ENCODE measurements at regions of chr4 and their contacts with region 1.

Region 1: DNA sequence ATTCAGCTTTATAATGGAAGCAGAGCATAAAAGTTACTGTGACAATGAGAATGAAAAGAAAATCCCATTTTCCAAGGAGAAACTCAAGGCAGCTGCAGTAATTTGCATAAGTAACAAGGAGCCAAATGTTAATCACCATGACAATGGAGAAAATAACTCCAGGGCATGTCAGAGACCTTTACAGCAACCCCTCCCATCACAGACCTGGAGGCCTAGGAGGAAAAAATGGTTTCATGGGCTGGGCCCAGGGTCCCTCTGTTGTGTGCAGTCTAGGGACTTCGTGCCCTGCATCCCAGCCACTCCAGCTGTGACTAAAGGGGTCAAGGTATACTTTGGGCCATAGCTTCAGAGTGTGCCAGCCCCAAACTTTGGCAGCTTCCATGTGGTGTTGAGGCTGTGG is 223.5 kb downstream of the NPFFR2 start:
- DNase-seq: no peak
- H3K4me3 ChIP-seq: no peak overlapping the region
- H3K27ac ChIP-seq: no peak overlapping the region
- H3K4me1 ChIP-seq: no peaks in the 10 kb centered on the region
- H3K27me3 ChIP-seq: no peaks in the 10 kb centered on the region
- CTCF ChIP-seq: no peak

Region 2: DNA sequence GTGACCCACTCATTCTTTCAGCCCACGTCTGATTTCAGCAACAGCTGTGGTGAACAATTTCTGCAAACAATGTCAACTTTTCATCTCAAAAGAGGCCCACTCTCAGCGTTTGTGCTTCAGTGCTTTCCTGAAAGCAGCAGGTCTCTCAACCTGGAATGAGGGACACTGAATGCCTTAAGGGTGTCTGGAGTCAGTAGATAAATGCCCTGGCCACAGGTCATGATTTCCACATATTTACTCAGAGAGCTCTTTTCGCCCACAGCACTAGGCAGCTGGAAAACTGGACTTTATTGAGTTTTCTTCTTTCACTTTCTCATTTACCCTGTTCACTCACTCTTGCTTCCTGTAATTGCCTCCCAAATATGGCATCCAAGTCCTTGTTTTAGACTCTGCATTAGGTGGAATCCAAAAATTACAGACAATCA is 170.7 kb before region 1 on chr4:
- intact Hi-C with region 1: no loop called
- DNase-seq: no peak
- H3K4me3 ChIP-seq: no peak overlapping the region
- H3K27ac ChIP-seq: no peak overlapping the region
- H3K4me1 ChIP-seq: no peaks in the 10 kb centered on the region
- H3K27me3 ChIP-seq: no peaks in the 10 kb centered on the region
- CTCF ChIP-seq: no peak

Region 3: GRCh38 chr4:72243641-72244040 is 11.6 kb before region 1 on chr4:
- intact Hi-C with region 1: no loop called
- DNase-seq: no peak
- H3K4me3 ChIP-seq: no peak overlapping the region
- H3K27ac ChIP-seq: no peak overlapping the region
- H3K4me1 ChIP-seq: no peaks in the 10 kb centered on the region
- H3K27me3 ChIP-seq: no peaks in the 10 kb centered on the region
- CTCF ChIP-seq: no peak

Region 4: DNA sequence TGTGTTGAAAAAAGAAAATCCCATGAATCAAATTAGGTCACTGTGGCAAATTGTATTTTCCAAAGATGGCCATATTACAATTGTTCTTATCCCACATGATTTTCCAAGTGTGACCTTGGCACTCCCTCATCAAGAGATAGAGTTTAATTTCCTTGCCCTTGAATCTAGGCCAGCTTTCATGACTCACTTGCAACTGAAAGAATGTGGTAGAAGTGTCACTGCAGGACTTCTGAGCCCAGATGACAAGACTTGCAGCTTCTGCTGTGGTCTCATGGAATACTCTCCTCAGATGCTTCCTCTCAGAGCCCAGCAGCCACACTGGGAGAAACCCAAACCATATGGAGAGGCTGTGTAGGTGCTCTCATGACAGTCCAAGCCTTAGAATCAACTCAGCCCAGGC is 174.8 kb after region 1 on chr4:
- intact Hi-C with region 1: no loop called
- DNase-seq: no peak
- H3K4me3 ChIP-seq: no peak overlapping the region
- H3K27ac ChIP-seq: no peak overlapping the region
- H3K4me1 ChIP-seq: no peaks in the 10 kb centered on the region
- H3K27me3 ChIP-seq: no peaks in the 10 kb centered on the region
- CTCF ChIP-seq: no peak

Region 5: DNA sequence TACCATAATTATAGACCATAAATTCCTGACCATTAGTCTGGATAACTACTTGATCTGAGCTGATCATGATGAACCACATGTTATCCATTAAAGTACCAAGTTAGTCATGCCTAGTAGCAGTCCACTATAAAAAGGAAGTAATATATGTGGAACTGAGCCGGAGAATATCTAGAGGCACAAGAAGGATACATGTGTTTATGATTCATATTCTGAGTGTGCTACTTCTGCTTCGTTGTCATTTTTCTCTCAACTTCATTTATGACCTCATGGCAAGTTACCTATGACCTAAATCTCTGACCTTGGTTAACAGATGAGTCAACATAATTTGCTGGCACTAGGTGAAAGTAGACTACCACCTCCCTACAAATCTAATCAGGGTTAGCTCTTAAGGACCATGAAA is 1059.8 kb after region 1 on chr4:
- intact Hi-C with region 1: loop called (anchors 5 kb)
- DNase-seq: no peak
- H3K4me3 ChIP-seq: no peak overlapping the region
- H3K27ac ChIP-seq: no peak overlapping the region
- H3K4me1 ChIP-seq: no peaks in the 10 kb centered on the region
- H3K27me3 ChIP-seq: no peaks in the 10 kb centered on the region
- CTCF ChIP-seq: no peak